ENCODE measurements at regions of chr11 and their contacts with region 1.

Region 1: DNA sequence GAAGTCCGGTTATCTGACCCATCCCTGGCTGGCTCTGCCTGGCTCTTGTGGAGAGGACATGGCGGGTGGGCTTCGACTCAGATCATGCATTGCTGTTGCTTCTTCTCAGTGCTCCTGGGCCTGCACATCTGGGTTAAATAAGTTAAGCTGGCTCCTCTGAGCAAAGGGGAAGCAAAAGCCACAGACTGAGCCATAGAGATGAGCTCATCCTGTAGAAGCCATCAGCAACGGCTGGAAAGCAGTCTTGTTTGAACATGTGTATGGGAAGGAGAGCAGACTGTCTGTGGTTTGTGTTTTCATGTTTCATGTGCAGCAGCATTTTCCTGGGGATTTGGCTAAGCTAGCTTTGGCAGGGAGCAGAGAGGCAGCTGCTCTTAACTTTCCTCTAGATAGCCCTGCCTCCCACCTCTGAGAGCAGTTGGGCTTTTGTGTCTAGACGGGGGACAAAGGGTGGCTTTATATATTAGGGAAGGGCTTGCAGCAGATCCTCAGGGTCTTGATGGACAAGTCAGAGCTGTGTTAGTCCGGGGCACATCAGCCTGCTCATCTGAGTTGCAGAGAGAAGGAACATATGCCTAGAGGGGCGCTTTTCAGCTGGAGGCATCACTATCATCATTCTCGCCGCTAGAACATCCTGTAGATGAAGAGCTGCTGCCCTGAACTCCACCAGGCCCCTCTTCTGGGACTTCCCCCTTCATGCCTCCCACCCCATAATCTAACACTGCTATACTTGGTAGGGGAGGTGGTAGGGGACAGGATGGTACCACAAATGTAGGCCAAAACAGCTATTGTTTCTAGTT is 14.9 kb downstream of the DCPS start:
- DNase-seq: peak; percentile 97
- ATAC-seq: peak; percentile 86
- H3K4me3 ChIP-seq: no peak overlapping the region
- H3K27ac ChIP-seq: peak overlapping the region; percentile 92
- H3K4me1 ChIP-seq: peaks cover 18% of the 10 kb centered on the region
- H3K27me3 ChIP-seq: no peaks in the 10 kb centered on the region
- CTCF ChIP-seq: no peak
- POLR2A ChIP-seq: no peak
- RAD21 ChIP-seq: peak; percentile 25

Region 2: GRCh38 chr11:126303623-126304456 is 14.9 kb before region 1 on chr11 and contains the start of gene DCPS:
- CTCF ChIA-PET with region 1: no interaction called
- POLR2A ChIA-PET with region 1: no interaction called
- dilution Hi-C with region 1: no loop called
- in situ Hi-C with region 1: no loop called
- intact Hi-C with region 1: loop called (anchors 1 kb)
- DNase-seq: peak; percentile 88
- ATAC-seq: peak; percentile 99
- H3K4me3 ChIP-seq: peak within 1 kb of the TSS; percentile 55
- H3K27ac ChIP-seq: peak within 1 kb of the TSS; percentile 85
- H3K4me1 ChIP-seq: peaks cover 3% of the 10 kb centered on the region; the same call in 1 of the 2 replicates
- H3K27me3 ChIP-seq: no peaks in the 10 kb centered on the region
- CTCF ChIP-seq: no peak
- POLR2A ChIP-seq: peak; percentile 90
- RAD21 ChIP-seq: no peak
- total RNA-seq, gene DCPS: 18.6 and 19.7 TPM in 2 replicates

Region 3: DNA sequence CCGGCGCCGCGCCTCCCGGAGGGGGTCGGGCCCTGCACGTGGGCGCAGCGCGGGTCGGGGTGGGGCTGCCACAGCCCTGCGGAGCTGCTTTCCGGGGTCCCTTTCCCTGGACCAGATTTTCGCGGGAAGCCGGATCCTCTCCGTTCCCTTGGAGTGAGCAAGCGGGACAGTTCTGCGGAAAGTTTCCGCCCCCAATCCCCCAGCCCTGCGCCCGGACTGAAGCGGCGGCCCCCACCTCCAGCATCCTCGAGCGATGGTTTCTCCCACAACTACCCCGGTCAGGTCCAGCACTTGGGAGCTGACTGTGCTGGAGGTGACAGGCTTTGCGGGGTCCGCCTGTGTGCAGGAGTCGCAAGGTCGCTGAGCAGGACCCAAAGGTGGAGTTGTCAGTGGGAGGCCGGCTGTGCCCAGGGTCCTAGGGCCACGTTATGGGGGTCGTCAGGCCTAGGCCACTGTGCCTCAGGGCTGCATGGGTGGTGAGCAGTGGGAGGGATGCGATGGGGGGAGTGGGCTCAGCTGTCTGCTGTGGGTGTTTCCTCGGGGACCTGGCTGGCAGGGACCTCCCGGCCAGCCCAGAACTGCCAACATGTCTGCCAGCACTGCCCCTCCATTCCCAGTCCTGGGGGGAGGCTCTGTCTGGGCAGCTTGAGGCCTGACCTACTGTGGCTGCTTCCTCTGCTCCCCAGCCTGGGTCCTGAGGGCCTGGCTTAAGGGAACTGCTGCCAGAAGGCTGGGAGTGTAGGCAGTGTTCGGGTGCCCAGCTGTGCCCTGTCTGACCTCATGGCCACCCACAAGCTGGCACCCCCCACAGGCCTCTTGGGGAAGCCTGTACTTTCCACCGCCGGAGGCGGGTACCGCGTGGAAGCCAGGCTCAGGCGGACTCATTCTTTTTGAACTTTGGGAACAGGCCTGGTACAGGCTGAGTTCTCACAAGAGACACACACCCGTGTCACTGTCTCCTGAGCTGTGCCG is 37.4 kb after region 1 on chr11:
- CTCF ChIA-PET with region 1: no interaction called
- POLR2A ChIA-PET with region 1: no interaction called
- dilution Hi-C with region 1: no loop called
- in situ Hi-C with region 1: no loop called
- intact Hi-C with region 1: loop called (anchors 2 kb)
- DNase-seq: no peak
- ATAC-seq: peak; percentile 10
- H3K4me3 ChIP-seq: peak overlapping the region; percentile 94
- H3K27ac ChIP-seq: peak overlapping the region; percentile 44
- H3K4me1 ChIP-seq: peaks cover 23% of the 10 kb centered on the region
- H3K27me3 ChIP-seq: no peaks in the 10 kb centered on the region
- CTCF ChIP-seq: no peak
- POLR2A ChIP-seq: no peak
- RAD21 ChIP-seq: no peak

Region 4: DNA sequence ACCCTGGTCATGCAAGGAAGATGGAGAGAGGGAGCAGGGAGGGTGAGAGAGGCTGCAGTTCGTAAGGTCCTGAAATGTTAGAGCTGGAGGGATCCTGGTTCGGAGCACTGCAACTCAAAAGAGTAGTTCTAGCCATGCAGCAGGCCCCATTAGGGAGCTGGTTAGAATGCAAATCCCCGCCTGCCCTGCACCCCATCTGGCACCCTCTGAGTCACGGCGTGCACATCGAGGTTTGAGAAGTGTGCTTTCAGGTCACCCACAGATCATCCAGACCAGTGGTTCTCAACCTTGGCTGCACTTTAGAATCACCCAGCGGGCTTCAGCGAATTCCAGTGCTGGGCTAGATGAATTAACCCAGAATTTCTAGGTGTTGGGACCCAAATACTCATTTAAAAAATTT is 84.9 kb after region 1 on chr11:
- CTCF ChIA-PET with region 1: no interaction called
- POLR2A ChIA-PET with region 1: no interaction called
- dilution Hi-C with region 1: no loop called
- in situ Hi-C with region 1: no loop called
- intact Hi-C with region 1: no loop called
- DNase-seq: no peak
- ATAC-seq: no peak; the same call in 1 of the 2 replicates
- H3K4me3 ChIP-seq: no peak overlapping the region
- H3K27ac ChIP-seq: no peak overlapping the region
- H3K4me1 ChIP-seq: peaks cover 4% of the 10 kb centered on the region; the same call in 1 of the 2 replicates
- H3K27me3 ChIP-seq: no peaks in the 10 kb centered on the region
- CTCF ChIP-seq: no peak
- POLR2A ChIP-seq: no peak
- RAD21 ChIP-seq: no peak

Region 5: DNA sequence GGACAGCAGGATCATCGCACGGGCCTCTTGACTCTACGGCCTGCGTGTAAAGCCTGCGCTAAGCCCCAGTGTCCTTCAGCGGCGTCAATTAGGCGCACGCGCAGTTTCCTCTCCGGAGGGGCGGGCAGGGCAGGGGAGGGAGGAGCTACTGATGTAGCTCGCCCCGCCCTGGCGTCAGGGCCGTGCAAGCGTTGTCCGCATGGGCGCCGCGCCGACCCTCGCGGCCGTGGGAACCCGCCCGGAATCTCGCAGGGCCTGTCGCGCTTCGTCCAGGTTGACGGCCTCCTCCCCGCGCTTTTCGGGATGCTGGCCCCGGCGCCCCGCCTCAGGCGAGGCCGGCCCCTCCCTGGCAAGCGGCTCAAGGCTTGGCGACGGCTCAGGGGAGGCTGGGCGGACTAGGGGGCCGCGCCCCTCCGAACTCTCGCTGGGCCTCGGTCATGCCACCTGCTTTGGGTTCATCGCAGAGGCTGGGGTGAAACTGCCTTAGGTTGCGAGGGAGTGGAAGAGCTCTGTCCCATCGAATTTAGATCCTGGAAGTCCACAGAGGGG is 97.8 kb after region 1 on chr11:
- CTCF ChIA-PET with region 1: no interaction called
- POLR2A ChIA-PET with region 1: no interaction called
- dilution Hi-C with region 1: no loop called
- in situ Hi-C with region 1: loop called (anchors 10 kb)
- intact Hi-C with region 1: loop called (anchors 2 kb)
- DNase-seq: peak; percentile 68
- ATAC-seq: peak; percentile 89
- H3K4me3 ChIP-seq: peak overlapping the region; percentile 42
- H3K27ac ChIP-seq: peak overlapping the region; percentile 64
- H3K4me1 ChIP-seq: peaks cover 29% of the 10 kb centered on the region
- H3K27me3 ChIP-seq: no peaks in the 10 kb centered on the region
- CTCF ChIP-seq: no peak
- POLR2A ChIP-seq: no peak
- RAD21 ChIP-seq: no peak

Measured in IMR-90 (cell line).